RWPE1 (cell line): ENCODE measurements at regions of chr15 and their contacts with region 1.

Region 1: DNA sequence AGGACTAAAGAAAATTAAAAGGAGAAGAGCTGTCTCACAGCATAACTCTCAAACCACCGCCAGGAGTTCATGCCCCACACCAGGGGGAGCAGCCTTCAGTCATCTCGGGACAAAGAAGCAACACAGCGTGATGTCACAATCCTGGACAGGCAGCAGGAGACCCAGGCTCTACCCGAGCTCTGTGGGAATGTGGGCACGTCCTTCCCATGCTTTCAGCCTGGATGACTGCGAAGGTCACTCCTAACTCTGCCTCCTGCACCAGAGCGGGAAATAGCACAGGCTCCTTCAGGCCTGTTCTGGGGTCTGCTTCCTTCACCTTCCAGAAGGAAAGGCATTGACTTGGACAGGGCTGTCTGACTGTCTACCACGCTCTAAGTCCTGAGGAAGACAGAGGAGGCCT is 31.3 kb downstream of the NOX5 start:
- DNase-seq: no peak
- H3K27ac ChIP-seq: peak overlapping the region; percentile 83
- CTCF ChIP-seq: no peak

Region 2: DNA sequence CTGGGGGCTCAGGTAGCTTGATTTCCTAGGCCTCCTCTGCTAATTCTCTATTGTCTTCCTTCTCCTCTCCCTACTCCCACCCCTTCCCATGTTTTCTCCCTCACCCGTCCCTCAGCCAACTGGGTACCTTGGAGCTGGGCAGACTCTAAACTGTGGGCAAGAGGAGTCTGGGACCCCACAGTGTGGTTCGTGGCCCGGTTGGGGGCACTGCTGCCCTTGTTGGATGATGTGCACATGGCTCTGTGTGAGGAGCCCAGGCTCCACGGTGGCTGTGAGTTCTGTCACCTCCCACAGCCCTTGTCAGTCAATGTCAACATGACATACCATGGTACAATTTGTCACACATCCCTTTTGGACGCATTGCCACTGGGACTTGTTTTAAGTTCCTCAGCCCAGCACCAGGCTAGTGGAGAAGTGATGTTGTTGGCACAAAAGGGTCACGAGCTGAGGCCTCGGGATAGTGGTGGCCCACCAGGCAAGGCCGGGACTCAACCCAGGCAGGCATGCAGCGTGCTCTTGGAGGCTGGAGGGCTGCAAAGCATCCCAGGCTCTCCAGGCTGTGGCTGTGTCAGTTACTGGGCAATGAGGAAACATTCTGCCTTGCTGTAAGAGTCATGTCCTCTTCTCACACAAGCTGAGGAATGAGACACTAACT is 909.6 kb after region 1 on chr15:
- CTCF ChIA-PET with region 1: no interaction called
- POLR2A ChIA-PET with region 1: interaction called, 10 read pairs
- DNase-seq: no peak
- H3K27ac ChIP-seq: no peak overlapping the region
- CTCF ChIP-seq: no peak